Naive thymus-derived CD4-positive, alpha-beta T cell (primary cell): ENCODE measurements at regions of chr12 and their contacts with region 1.

Region 1: DNA sequence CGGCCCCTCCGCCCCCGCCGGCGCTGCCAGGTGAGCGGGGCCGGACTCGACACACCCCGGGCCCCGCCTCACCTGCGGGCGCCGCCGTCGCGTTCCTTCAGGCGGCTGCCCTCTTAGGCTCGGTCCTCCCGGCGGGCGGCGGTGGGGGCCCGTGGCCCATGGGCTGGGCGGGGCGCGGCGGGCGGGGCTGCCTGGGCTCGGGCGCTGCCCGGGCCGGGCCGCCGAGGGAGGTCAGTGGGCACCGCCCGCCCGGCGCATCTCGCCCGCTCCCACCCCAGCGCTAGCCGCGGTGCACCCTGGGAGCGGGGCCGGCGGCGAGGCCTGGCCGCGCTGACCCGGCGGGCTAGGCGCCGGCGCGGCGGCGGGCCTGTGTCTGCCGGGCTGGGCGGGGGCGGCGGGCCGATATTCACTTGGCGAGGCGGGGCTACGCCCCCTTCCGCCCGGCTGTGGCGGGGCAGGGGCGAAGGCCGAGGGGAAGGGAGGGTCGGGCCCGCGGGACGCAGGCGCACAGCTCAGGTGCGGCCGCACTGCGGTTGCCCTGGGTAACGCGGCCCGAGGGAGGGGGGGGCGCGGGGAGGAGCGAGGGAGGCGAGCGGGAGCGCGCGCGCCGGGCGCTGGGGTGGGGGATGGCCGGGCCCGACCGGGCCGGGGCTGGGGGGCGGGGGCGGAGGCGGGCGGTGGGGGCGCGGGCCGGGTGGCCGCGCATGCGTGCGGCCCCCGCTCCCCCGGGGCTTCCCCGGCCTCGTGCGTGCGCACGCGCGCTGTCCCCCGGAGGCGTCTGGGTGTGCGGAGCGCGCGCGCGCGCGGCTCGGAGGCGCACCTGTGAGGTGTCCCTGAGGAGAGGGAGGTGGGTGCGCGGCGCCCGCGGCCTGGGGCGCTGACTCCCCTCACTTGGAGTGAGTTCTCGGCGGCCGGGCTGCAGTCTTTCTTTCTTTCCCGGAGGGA is at the starts of genes CCDC92 and ZNF664:
- DNase-seq: peak; percentile 87 to 97 (median 92)
- ATAC-seq: peak; percentile 90
- H3K4me3 ChIP-seq: peak within 1 kb of the TSS; percentile 58
- H3K4me3 Mint-ChIP-seq: peak within 1 kb of the TSS; percentile 90 to 99 (median 96)
- H3K27ac ChIP-seq: peak within 1 kb of the TSS; percentile 69
- H3K27ac Mint-ChIP-seq: peak within 1 kb of the TSS; percentile 87 to 98 (median 91)
- H3K4me1 ChIP-seq: peaks cover 0 to 9% of the 10 kb centered on the region in 2 donors
- H3K4me1 Mint-ChIP-seq: peaks cover 13 to 50% (median 45%) of the 10 kb centered on the region in 7 donors
- H3K27me3 ChIP-seq: no peaks in the 10 kb centered on the region
- H3K27me3 Mint-ChIP-seq: peaks cover 0 to 11% (median 0%) of the 10 kb centered on the region in 5 donors
- total RNA-seq, gene CCDC92: 17.3 to 24.9 (median 23.0) TPM
- total RNA-seq, gene ZNF664: 25.0 to 57.5 (median 45.8) TPM

Region 2: GRCh38 chr12:122974274-122974891 is 998.3 kb before region 1 on chr12:
- CTCF ChIA-PET with region 1: no interaction called
- POLR2A ChIA-PET with region 1: no interaction called
- intact Hi-C with region 1: loop called in 1 of 2 experiments (anchors 10 kb)
- DNase-seq: peak; percentile 92 to 98 (median 98)
- ATAC-seq: peak; percentile 92
- H3K4me3 ChIP-seq: peak overlapping the region; percentile 100
- H3K4me3 Mint-ChIP-seq: peak overlapping the region; percentile 92 to 99 (median 97)
- H3K27ac ChIP-seq: peak overlapping the region; percentile 98
- H3K27ac Mint-ChIP-seq: peak overlapping the region; percentile 99 to 100 (median 99)
- H3K4me1 ChIP-seq: peaks cover 18 to 23% of the 10 kb centered on the region in 2 donors
- H3K4me1 Mint-ChIP-seq: peaks cover 17 to 39% (median 30%) of the 10 kb centered on the region in 7 donors
- H3K27me3 ChIP-seq: no peaks in the 10 kb centered on the region
- H3K27me3 Mint-ChIP-seq: peaks cover 0 to 3% (median 0%) of the 10 kb centered on the region in 5 donors

Region 3: GRCh38 chr12:123670882-123671728 is 301.6 kb before region 1 on chr12 and contains the start of gene TCTN2:
- CTCF ChIA-PET with region 1: no interaction called
- POLR2A ChIA-PET with region 1: no interaction called
- intact Hi-C with region 1: loop called in 1 of 2 experiments (anchors 5 kb)
- DNase-seq: peak; percentile 81 to 93 (median 91)
- ATAC-seq: peak; percentile 100
- H3K4me3 ChIP-seq: peak within 1 kb of the TSS; percentile 75
- H3K4me3 Mint-ChIP-seq: peak within 1 kb of the TSS; percentile 75 to 92 (median 86)
- H3K27ac ChIP-seq: peak within 1 kb of the TSS; percentile 69
- H3K27ac Mint-ChIP-seq: peak within 1 kb of the TSS; percentile 31 to 86 (median 68)
- H3K4me1 ChIP-seq: peaks cover 3 to 10% of the 10 kb centered on the region in 2 donors
- H3K4me1 Mint-ChIP-seq: peaks cover 5 to 19% (median 11%) of the 10 kb centered on the region in 7 donors
- H3K27me3 ChIP-seq: no peaks in the 10 kb centered on the region
- H3K27me3 Mint-ChIP-seq: no peaks in the 10 kb centered on the region
- total RNA-seq, gene TCTN2: 2.5 to 9.1 (median 5.3) TPM

Region 4: GRCh38 chr12:123905319-123905925 is 67.3 kb before region 1 on chr12:
- CTCF ChIA-PET with region 1: interaction called, 5 read pairs
- POLR2A ChIA-PET with region 1: no interaction called
- intact Hi-C with region 1: loop called in 1 of 2 experiments (anchors 1 kb)
- DNase-seq: peak; percentile 38 to 78 (median 66)
- ATAC-seq: peak; percentile 76
- H3K4me3 ChIP-seq: no peak overlapping the region
- H3K4me3 Mint-ChIP-seq: no peak overlapping the region
- H3K27ac ChIP-seq: no peak overlapping the region
- H3K27ac Mint-ChIP-seq: peak overlapping the region in 1 of 9 donors; percentile 42
- H3K4me1 ChIP-seq: no peaks in the 10 kb centered on the region
- H3K4me1 Mint-ChIP-seq: peaks cover 7 to 17% (median 15%) of the 10 kb centered on the region in 7 donors
- H3K27me3 ChIP-seq: no peaks in the 10 kb centered on the region
- H3K27me3 Mint-ChIP-seq: peaks cover 0 to 17% (median 3%) of the 10 kb centered on the region in 5 donors

Region 5: GRCh38 chr12:123938679-123939480 is 33.8 kb before region 1 on chr12:
- CTCF ChIA-PET with region 1: no interaction called
- POLR2A ChIA-PET with region 1: interaction called, 3 read pairs
- intact Hi-C with region 1: loop called (anchors 1 kb)
- DNase-seq: peak in 1 of 9 donors; percentile 3
- ATAC-seq: no peak
- H3K4me3 ChIP-seq: peak overlapping the region; percentile 13
- H3K4me3 Mint-ChIP-seq: peak overlapping the region; percentile 76 to 90 (median 84)
- H3K27ac ChIP-seq: peak overlapping the region; percentile 68
- H3K27ac Mint-ChIP-seq: peak overlapping the region; percentile 85 to 98 (median 92)
- H3K4me1 ChIP-seq: peaks cover 14 to 18% of the 10 kb centered on the region in 2 donors
- H3K4me1 Mint-ChIP-seq: peaks cover 26 to 38% (median 30%) of the 10 kb centered on the region in 7 donors
- H3K27me3 ChIP-seq: no peaks in the 10 kb centered on the region
- H3K27me3 Mint-ChIP-seq: no peaks in the 10 kb centered on the region

Region 6: DNA sequence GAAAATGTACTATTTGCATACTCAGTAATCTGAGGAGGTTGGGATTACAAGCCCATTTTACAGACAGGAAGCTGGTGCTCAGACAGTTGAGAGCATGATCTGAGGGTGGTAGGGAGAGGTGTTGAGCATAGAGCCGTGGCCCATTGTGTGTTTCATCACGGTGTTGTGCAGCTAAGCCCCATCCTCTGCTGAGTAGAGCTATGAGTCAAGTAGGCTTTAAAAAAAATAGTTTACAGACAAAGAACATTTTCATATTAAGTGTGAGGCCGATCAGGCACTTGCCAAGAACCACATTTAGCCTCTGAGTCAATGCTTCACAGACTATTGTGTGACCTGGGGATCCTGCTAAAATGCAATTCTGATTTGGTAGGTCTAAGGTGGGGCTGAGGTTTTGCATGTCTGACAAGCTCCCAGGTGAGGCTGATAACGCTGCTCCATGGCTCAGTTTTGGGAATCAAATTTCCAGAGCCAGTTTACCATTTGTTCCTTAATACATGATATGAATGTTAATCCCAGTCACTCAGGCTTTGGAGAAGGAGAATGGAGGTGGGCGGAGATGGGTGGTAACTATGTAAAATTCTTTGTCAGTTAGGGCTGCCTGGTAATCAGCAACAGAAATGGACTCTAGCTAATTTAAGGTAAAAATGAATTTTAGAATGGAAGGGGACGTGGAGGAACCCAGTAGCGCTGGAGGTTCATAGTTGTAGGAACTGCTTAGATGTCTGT is 22.5 kb after region 1 on chr12:
- CTCF ChIA-PET with region 1: no interaction called
- POLR2A ChIA-PET with region 1: no interaction called
- intact Hi-C with region 1: no loop called
- DNase-seq: no peak
- ATAC-seq: peak; percentile 36
- H3K4me3 ChIP-seq: no peak overlapping the region
- H3K4me3 Mint-ChIP-seq: no peak overlapping the region
- H3K27ac ChIP-seq: no peak overlapping the region
- H3K27ac Mint-ChIP-seq: peak overlapping the region in 2 of 9 donors; percentile 18 to 71
- H3K4me1 ChIP-seq: no peaks in the 10 kb centered on the region
- H3K4me1 Mint-ChIP-seq: peaks cover 29 to 69% (median 40%) of the 10 kb centered on the region in 7 donors
- H3K27me3 ChIP-seq: no peaks in the 10 kb centered on the region
- H3K27me3 Mint-ChIP-seq: no peaks in the 10 kb centered on the region

Region 7: GRCh38 chr12:124917135-124917840 is 944.6 kb after region 1 on chr12:
- CTCF ChIA-PET with region 1: no interaction called
- POLR2A ChIA-PET with region 1: interaction called, 5 read pairs
- intact Hi-C with region 1: loop called in 1 of 2 experiments (anchors 2 kb)
- DNase-seq: peak; percentile 73 to 97 (median 93)
- ATAC-seq: peak; percentile 81
- H3K4me3 ChIP-seq: peak overlapping the region; percentile 60
- H3K4me3 Mint-ChIP-seq: peak overlapping the region; percentile 83 to 100 (median 88)
- H3K27ac ChIP-seq: peak overlapping the region; percentile 84
- H3K27ac Mint-ChIP-seq: peak overlapping the region; percentile 90 to 100 (median 98)
- H3K4me1 ChIP-seq: peaks cover 57 to 70% of the 10 kb centered on the region in 2 donors
- H3K4me1 Mint-ChIP-seq: peaks cover 64 to 98% (median 90%) of the 10 kb centered on the region in 7 donors
- H3K27me3 ChIP-seq: no peaks in the 10 kb centered on the region
- H3K27me3 Mint-ChIP-seq: peaks cover 0 to 16% (median 0%) of the 10 kb centered on the region in 5 donors

Region 8: GRCh38 chr12:124992874-124993625 is 1020.3 kb after region 1 on chr12:
- CTCF ChIA-PET with region 1: no interaction called
- POLR2A ChIA-PET with region 1: no interaction called
- intact Hi-C with region 1: loop called in 1 of 2 experiments (anchors 2 kb)
- DNase-seq: peak; percentile 67 to 86 (median 81)
- ATAC-seq: peak; percentile 82
- H3K4me3 ChIP-seq: peak overlapping the region; percentile 67
- H3K4me3 Mint-ChIP-seq: peak overlapping the region; percentile 79 to 97 (median 86)
- H3K27ac ChIP-seq: peak overlapping the region; percentile 62
- H3K27ac Mint-ChIP-seq: peak overlapping the region; percentile 14 to 85 (median 80)
- H3K4me1 ChIP-seq: peaks cover 11 to 29% of the 10 kb centered on the region in 2 donors
- H3K4me1 Mint-ChIP-seq: peaks cover 25 to 42% (median 34%) of the 10 kb centered on the region in 7 donors
- H3K27me3 ChIP-seq: no peaks in the 10 kb centered on the region
- H3K27me3 Mint-ChIP-seq: no peaks in the 10 kb centered on the region